PC-9 (cell line): ENCODE measurements at regions of chr2 and their contacts with region 1.

Region 1: GRCh38 chr2:121095257-121096080 is 189.5 kb downstream of the TFCP2L1 start:
- DNase-seq: peak; percentile 60 to 68
- H3K4me3 ChIP-seq: no peak overlapping the region
- H3K27ac ChIP-seq: no peak overlapping the region
- H3K4me1 ChIP-seq: peaks cover 6% of the 10 kb centered on the region; the same call in 1 of the 2 replicates
- H3K27me3 ChIP-seq: peaks cover 4% of the 10 kb centered on the region; the same call in 1 of the 2 replicates
- CTCF ChIP-seq: peak; percentile 88

Region 2: GRCh38 chr2:120971866-120972685 is 123.4 kb before region 1 on chr2:
- CTCF ChIA-PET with region 1: no interaction called
- POLR2A ChIA-PET with region 1: no interaction called
- intact Hi-C with region 1: no loop called
- DNase-seq: no peak
- H3K4me3 ChIP-seq: no peak overlapping the region
- H3K27ac ChIP-seq: no peak overlapping the region
- H3K4me1 ChIP-seq: no peaks in the 10 kb centered on the region
- H3K27me3 ChIP-seq: peaks cover 22% of the 10 kb centered on the region; the same call in 1 of the 2 replicates
- CTCF ChIP-seq: no peak

Region 3: GRCh38 chr2:121319953-121320352 is 224.5 kb after region 1 on chr2:
- CTCF ChIA-PET with region 1: no interaction called
- POLR2A ChIA-PET with region 1: no interaction called
- intact Hi-C with region 1: loop called (anchors 1 kb)
- DNase-seq: no peak
- H3K4me3 ChIP-seq: no peak overlapping the region
- H3K27ac ChIP-seq: no peak overlapping the region
- H3K4me1 ChIP-seq: no peaks in the 10 kb centered on the region
- H3K27me3 ChIP-seq: no peaks in the 10 kb centered on the region
- CTCF ChIP-seq: no peak

Region 4: GRCh38 chr2:121356058-121356640 is 260.7 kb after region 1 on chr2:
- CTCF ChIA-PET with region 1: interaction called, 22 read pairs
- POLR2A ChIA-PET with region 1: interaction called, 3 read pairs
- intact Hi-C with region 1: loop called (anchors 1 kb)
- DNase-seq: peak; percentile 56 to 72
- H3K4me3 ChIP-seq: no peak overlapping the region
- H3K27ac ChIP-seq: no peak overlapping the region
- H3K4me1 ChIP-seq: peaks cover 12% of the 10 kb centered on the region
- H3K27me3 ChIP-seq: no peaks in the 10 kb centered on the region
- CTCF ChIP-seq: peak; percentile 92

Region 5: GRCh38 chr2:121382744-121383143 is 287.3 kb after region 1 on chr2:
- CTCF ChIA-PET with region 1: no interaction called
- POLR2A ChIA-PET with region 1: interaction called, 21 read pairs
- intact Hi-C with region 1: no loop called
- DNase-seq: no peak
- H3K4me3 ChIP-seq: no peak overlapping the region
- H3K27ac ChIP-seq: no peak overlapping the region
- H3K4me1 ChIP-seq: no peaks in the 10 kb centered on the region
- H3K27me3 ChIP-seq: no peaks in the 10 kb centered on the region
- CTCF ChIP-seq: no peak